IMR-90 (cell line): ENCODE measurements at regions of chr4 and their contacts with region 1.

Region 1: GRCh38 chr4:128287871-128288688 is 467 bp upstream of the PGRMC2 start:
- DNase-seq: peak; percentile 99
- ATAC-seq: peak; percentile 92
- H3K4me3 ChIP-seq: peak overlapping the region; percentile 65
- H3K27ac ChIP-seq: peak overlapping the region; percentile 90
- H3K4me1 ChIP-seq: peaks cover 4% of the 10 kb centered on the region; the same call in 1 of the 2 replicates
- H3K27me3 ChIP-seq: no peaks in the 10 kb centered on the region
- CTCF ChIP-seq: peak; percentile 28; the same call in 1 of the 2 replicates
- POLR2A ChIP-seq: peak; percentile 70
- RAD21 ChIP-seq: peak; percentile 37

Region 2: DNA sequence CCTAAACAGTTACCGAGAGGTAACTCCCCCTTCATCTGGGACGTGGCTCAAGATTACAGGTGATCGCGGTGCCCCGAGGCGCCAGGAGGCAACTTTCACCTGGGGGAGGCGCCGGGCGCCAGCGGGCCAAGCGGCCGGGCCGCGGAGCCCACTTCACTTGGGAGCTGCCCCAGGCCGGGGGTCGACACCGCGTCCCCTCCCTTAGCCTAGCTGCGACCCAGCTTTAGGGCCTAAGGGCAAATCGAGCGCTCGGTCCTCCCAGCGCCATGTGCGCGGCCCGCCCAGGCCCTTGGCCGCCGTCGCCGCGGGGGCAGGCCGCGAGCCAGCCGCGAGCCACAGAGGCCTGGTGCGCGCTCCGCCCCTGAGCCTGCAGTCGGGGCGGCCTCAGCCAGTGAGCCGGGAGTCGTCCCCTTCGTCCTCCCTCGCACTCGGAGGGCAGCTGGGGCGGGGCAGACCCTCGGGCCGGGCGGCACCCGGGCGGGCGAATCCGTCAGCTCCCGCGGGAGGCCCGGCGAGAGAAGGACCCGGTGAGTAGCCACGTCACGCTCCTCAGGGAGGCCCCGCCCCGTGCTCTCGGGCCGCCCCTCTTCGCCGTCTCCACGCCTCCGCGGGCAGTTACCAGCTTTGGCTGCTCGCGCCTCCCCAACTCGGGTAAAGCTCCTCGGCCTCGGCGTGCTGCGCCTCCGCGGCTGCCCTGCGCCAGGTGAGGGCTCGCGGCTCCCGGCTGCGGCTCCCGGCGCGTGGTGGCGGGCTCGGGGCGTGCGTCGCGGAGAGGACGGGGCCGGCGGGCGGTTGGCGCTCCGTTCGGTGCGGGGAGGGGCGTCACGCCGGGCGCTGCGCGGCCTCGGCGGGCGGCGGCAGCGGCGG is 227.1 kb before region 1 on chr4 and contains the start of gene LARP1B:
- CTCF ChIA-PET with region 1: no interaction called
- POLR2A ChIA-PET with region 1: no interaction called
- dilution Hi-C with region 1: no loop called
- in situ Hi-C with region 1: no loop called
- intact Hi-C with region 1: loop called (anchors 10 kb)
- DNase-seq: peak; percentile 95
- ATAC-seq: peak; percentile 96
- H3K4me3 ChIP-seq: peak within 1 kb of the TSS; percentile 77
- H3K27ac ChIP-seq: peak within 1 kb of the TSS; percentile 85
- H3K4me1 ChIP-seq: no peaks in the 10 kb centered on the region
- H3K27me3 ChIP-seq: no peaks in the 10 kb centered on the region
- CTCF ChIP-seq: no peak
- POLR2A ChIP-seq: peak; percentile 90
- RAD21 ChIP-seq: no peak
- total RNA-seq, gene LARP1B: 11.1 and 21.9 TPM in 2 replicates

Region 3: GRCh38 chr4:128076465-128076864 is 211.6 kb before region 1 on chr4:
- CTCF ChIA-PET with region 1: no interaction called
- POLR2A ChIA-PET with region 1: no interaction called
- dilution Hi-C with region 1: no loop called
- in situ Hi-C with region 1: no loop called
- intact Hi-C with region 1: no loop called
- DNase-seq: no peak
- ATAC-seq: no peak
- H3K4me3 ChIP-seq: no peak overlapping the region
- H3K27ac ChIP-seq: no peak overlapping the region
- H3K4me1 ChIP-seq: no peaks in the 10 kb centered on the region
- H3K27me3 ChIP-seq: no peaks in the 10 kb centered on the region
- CTCF ChIP-seq: no peak
- POLR2A ChIP-seq: no peak
- RAD21 ChIP-seq: no peak

Region 4: DNA sequence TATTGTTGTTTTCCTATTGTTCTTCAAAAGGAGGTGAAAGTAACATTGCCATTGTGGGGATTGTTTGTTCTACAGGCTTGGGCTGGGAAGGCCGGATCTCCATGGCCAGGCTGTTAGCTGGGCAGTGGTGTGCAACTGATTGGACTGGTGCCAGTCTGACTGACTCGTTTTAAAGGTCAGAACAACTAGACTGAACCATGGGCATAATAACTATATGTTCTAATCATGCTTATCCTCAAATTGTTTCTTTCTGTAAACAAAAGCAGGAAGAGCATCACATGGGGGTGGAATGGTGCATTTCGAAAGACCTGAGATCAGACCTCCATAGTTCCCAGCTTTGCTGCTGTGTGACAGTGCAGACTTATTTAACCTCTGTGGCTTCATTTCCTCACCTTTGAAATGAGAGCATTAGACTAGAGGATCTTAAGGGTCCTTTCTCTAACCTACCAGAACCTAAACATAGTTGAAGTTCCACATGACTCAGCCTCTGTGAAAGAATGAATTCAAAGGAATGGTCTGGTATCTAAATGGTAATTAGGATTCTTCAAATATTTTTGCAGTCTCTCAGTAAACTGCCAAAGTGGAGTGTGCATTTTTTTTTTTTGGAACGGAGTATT is 66.2 kb after region 1 on chr4:
- CTCF ChIA-PET with region 1: interaction called, 3 read pairs
- POLR2A ChIA-PET with region 1: no interaction called
- dilution Hi-C with region 1: no loop called
- in situ Hi-C with region 1: no loop called
- intact Hi-C with region 1: loop called (anchors 1 kb)
- DNase-seq: peak; percentile 97
- ATAC-seq: peak; percentile 71
- H3K4me3 ChIP-seq: no peak overlapping the region
- H3K27ac ChIP-seq: peak overlapping the region; percentile 99
- H3K4me1 ChIP-seq: peaks cover 41% of the 10 kb centered on the region
- H3K27me3 ChIP-seq: no peaks in the 10 kb centered on the region
- CTCF ChIP-seq: no peak
- POLR2A ChIP-seq: no peak
- RAD21 ChIP-seq: no peak

Region 5: DNA sequence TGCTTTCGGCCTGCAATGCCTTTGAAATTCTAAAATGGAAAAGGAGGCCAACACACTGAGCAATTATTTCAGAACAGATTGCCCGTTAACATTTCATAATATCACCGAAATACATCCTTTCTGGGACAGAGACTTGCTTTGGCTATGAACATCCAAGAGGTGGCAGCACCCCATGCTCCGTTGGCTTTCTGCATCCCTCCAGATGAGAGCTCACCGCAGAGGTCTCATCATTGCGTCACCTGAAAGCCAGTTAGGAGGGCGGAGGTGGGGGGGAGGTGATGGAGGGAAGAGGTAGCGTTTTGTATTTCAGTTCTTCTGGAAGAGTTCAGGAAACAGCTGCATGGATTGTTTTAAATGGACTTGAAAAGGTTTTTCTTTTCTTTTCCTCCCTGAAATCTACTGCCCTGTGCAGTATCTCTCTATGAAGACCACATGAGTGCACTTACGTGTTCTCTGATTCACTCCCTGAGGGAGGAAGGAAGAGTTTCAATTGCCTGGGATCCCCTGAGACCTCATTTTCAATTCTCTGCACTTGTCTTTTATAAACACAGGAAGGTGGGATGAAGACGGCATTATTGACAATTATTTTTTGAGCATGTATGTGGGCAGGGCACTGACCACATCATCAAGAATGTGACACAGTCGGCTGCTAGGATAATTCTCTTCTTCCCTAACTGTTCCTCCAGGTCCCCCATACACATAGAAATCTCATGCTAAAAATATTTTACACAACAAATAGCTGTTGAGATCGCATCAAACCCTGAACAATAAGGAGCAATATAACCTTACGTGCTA is 166.4 kb after region 1 on chr4:
- CTCF ChIA-PET with region 1: no interaction called
- POLR2A ChIA-PET with region 1: no interaction called
- dilution Hi-C with region 1: no loop called
- in situ Hi-C with region 1: no loop called
- intact Hi-C with region 1: loop called (anchors 2 kb)
- DNase-seq: peak; percentile 97
- ATAC-seq: peak; percentile 95
- H3K4me3 ChIP-seq: peak overlapping the region; percentile 10; the same call in 1 of the 2 replicates
- H3K27ac ChIP-seq: peak overlapping the region; percentile 77
- H3K4me1 ChIP-seq: peaks cover 20% of the 10 kb centered on the region
- H3K27me3 ChIP-seq: no peaks in the 10 kb centered on the region
- CTCF ChIP-seq: peak; percentile 95
- POLR2A ChIP-seq: peak; percentile 44; the same call in 1 of the 2 replicates
- RAD21 ChIP-seq: peak; percentile 98

Region 6: GRCh38 chr4:128574706-128575105 is 286.6 kb after region 1 on chr4:
- CTCF ChIA-PET with region 1: no interaction called
- POLR2A ChIA-PET with region 1: no interaction called
- dilution Hi-C with region 1: no loop called
- in situ Hi-C with region 1: no loop called
- intact Hi-C with region 1: loop called (anchors 5 kb)
- DNase-seq: peak; percentile 68
- ATAC-seq: peak; percentile 25
- H3K4me3 ChIP-seq: no peak overlapping the region
- H3K27ac ChIP-seq: no peak overlapping the region
- H3K4me1 ChIP-seq: peaks cover 22% of the 10 kb centered on the region
- H3K27me3 ChIP-seq: no peaks in the 10 kb centered on the region
- CTCF ChIP-seq: peak; percentile 58
- POLR2A ChIP-seq: no peak
- RAD21 ChIP-seq: peak; percentile 55

Region 7: GRCh38 chr4:129093191-129093920 is 805.3 kb after region 1 on chr4 and contains the start of gene SCLT1:
- CTCF ChIA-PET with region 1: no interaction called
- POLR2A ChIA-PET with region 1: no interaction called
- dilution Hi-C with region 1: no loop called
- in situ Hi-C with region 1: no loop called
- intact Hi-C with region 1: loop called (anchors 2 kb)
- DNase-seq: peak; percentile 99
- ATAC-seq: peak; percentile 96
- H3K4me3 ChIP-seq: peak within 1 kb of the TSS; percentile 87
- H3K27ac ChIP-seq: peak within 1 kb of the TSS; percentile 86
- H3K4me1 ChIP-seq: no peaks in the 10 kb centered on the region
- H3K27me3 ChIP-seq: no peaks in the 10 kb centered on the region
- CTCF ChIP-seq: no peak
- POLR2A ChIP-seq: peak; percentile 93
- RAD21 ChIP-seq: no peak
- total RNA-seq, gene SCLT1: 7.7 and 15.3 TPM in 2 replicates